Activated CD4-positive, alpha-beta T cell treated with anti-CD3 and anti-CD28 coated beads for 36 hours (primary cell): ENCODE measurements at regions of chr3 and their contacts with region 1.

Region 1: GRCh38 chr3:53072653-53073552 is 27.0 kb upstream of the SFMBT1 start:
- DNase-seq: peak; percentile 95
- ATAC-seq: peak; percentile 94
- H3K4me3 Mint-ChIP-seq: peak overlapping the region; percentile 81
- H3K27ac Mint-ChIP-seq: peak overlapping the region; percentile 97
- H3K4me1 Mint-ChIP-seq: peaks cover 18% of the 10 kb centered on the region
- H3K27me3 Mint-ChIP-seq: no peaks in the 10 kb centered on the region

Region 2: GRCh38 chr3:52742418-52743041 is 330.4 kb before region 1 on chr3:
- CTCF ChIA-PET with region 1: interaction called, 3 read pairs
- POLR2A ChIA-PET with region 1: no interaction called
- intact Hi-C with region 1: loop called (anchors 1 kb)
- DNase-seq: no peak
- ATAC-seq: no peak
- H3K4me3 Mint-ChIP-seq: no peak overlapping the region
- H3K27ac Mint-ChIP-seq: no peak overlapping the region
- H3K4me1 Mint-ChIP-seq: no peaks in the 10 kb centered on the region
- H3K27me3 Mint-ChIP-seq: no peaks in the 10 kb centered on the region

Region 3: DNA sequence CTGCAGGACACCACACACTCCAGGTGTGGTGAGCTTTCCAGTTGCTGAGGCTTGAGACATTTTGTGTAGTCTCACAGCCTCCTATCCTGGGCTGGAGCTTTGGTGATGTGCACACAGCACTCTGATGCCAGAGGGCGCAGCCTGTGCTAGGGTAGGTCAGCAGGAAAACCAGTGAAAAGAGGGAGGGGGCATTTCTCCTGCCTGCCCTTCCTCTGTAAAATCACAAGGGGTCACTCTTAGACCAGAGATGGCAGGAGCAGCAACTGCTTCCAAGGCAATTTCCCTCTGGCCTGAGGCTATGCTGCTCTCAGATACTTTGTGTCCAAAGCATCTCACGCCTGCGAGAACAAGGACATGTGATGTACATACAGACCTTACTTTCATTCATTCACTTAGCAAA is 221.6 kb before region 1 on chr3:
- CTCF ChIA-PET with region 1: interaction called, 9 read pairs
- POLR2A ChIA-PET with region 1: no interaction called
- intact Hi-C with region 1: loop called (anchors 1 kb)
- DNase-seq: peak; percentile 50
- ATAC-seq: peak; percentile 88
- H3K4me3 Mint-ChIP-seq: no peak overlapping the region
- H3K27ac Mint-ChIP-seq: no peak overlapping the region
- H3K4me1 Mint-ChIP-seq: no peaks in the 10 kb centered on the region
- H3K27me3 Mint-ChIP-seq: no peaks in the 10 kb centered on the region

Region 4: GRCh38 chr3:52934630-52935530 is 138.0 kb before region 1 on chr3:
- CTCF ChIA-PET with region 1: interaction called, 5 read pairs
- POLR2A ChIA-PET with region 1: no interaction called
- intact Hi-C with region 1: loop called (anchors 1 kb)
- DNase-seq: peak; percentile 75
- ATAC-seq: peak; percentile 99
- H3K4me3 Mint-ChIP-seq: no peak overlapping the region
- H3K27ac Mint-ChIP-seq: no peak overlapping the region
- H3K4me1 Mint-ChIP-seq: peaks cover 12% of the 10 kb centered on the region
- H3K27me3 Mint-ChIP-seq: no peaks in the 10 kb centered on the region

Region 5: GRCh38 chr3:52998730-52999509 is 74.0 kb before region 1 on chr3:
- CTCF ChIA-PET with region 1: no interaction called
- POLR2A ChIA-PET with region 1: no interaction called
- intact Hi-C with region 1: no loop called
- DNase-seq: no peak
- ATAC-seq: no peak
- H3K4me3 Mint-ChIP-seq: no peak overlapping the region
- H3K27ac Mint-ChIP-seq: no peak overlapping the region
- H3K4me1 Mint-ChIP-seq: peaks cover 11% of the 10 kb centered on the region
- H3K27me3 Mint-ChIP-seq: no peaks in the 10 kb centered on the region